Heart left ventricle (tissue), 16 donors: ENCODE measurements at regions of chr10 and their contacts with region 1.

Region 1: DNA sequence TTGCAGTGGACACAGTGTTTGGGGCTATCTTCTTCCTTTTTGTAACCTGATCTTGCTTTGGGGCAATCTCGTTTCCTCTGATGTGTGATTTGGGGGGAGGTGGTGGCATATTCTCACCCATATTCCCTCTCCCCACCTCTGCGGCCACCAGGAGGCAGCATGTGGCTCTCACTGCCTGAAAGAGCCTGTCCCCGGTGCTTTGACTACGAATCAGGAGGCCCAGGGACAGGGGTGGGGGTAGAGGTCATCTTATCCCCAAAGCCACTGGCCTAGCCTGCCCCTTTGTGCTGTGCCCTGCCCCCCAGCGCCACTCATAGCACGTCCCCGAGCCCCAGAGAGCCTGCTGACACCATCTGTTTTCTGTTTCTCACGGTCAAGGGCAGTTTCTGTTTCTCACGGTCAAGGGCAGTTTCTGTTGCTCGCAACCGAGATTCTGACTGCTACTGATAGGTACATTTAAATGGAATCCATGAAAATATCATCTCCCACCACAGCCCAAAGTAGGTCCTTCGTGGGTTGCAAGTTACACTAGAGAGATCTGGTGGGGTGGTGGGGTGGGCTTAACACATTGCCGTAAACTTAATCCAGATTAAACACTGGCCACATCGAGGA is 28.2 kb downstream of the PHYH start:
- DNase-seq: peak in 4 of 5 donors; percentile 13 to 63 (median 39)
- ATAC-seq: peak in 3 of 4 donors; percentile 47 to 59 (median 48)
- H3K4me3 ChIP-seq: no peak overlapping the region
- H3K27ac ChIP-seq: peak overlapping the region in 5 of 12 donors; percentile 5 to 43 (median 29)
- H3K4me1 ChIP-seq: peaks cover 0 to 15% (median 3%) of the 10 kb centered on the region in 12 donors
- H3K27me3 ChIP-seq: no peaks in the 10 kb centered on the region
- CTCF ChIP-seq: peak in 7 of 12 donors; percentile 7 to 48 (median 36)
- POLR2A ChIP-seq: no peak

Region 2: GRCh38 chr10:12875100-12875499 is 396.6 kb before region 1 on chr10:
- intact Hi-C with region 1: no loop called
- DNase-seq: no peak
- ATAC-seq: no peak
- H3K4me3 ChIP-seq: no peak overlapping the region
- H3K27ac ChIP-seq: no peak overlapping the region
- H3K4me1 ChIP-seq: peaks cover 0 to 12% (median 0%) of the 10 kb centered on the region in 12 donors
- H3K27me3 ChIP-seq: peaks cover 0 to 13% (median 0%) of the 10 kb centered on the region in 9 donors
- CTCF ChIP-seq: no peak
- POLR2A ChIP-seq: no peak

Region 3: GRCh38 chr10:13180788-13181187 is 90.9 kb before region 1 on chr10:
- intact Hi-C with region 1: no loop called
- DNase-seq: no peak
- ATAC-seq: no peak
- H3K4me3 ChIP-seq: no peak overlapping the region
- H3K27ac ChIP-seq: no peak overlapping the region
- H3K4me1 ChIP-seq: no peaks in the 10 kb centered on the region
- H3K27me3 ChIP-seq: no peaks in the 10 kb centered on the region
- CTCF ChIP-seq: no peak
- POLR2A ChIP-seq: no peak

Region 4: DNA sequence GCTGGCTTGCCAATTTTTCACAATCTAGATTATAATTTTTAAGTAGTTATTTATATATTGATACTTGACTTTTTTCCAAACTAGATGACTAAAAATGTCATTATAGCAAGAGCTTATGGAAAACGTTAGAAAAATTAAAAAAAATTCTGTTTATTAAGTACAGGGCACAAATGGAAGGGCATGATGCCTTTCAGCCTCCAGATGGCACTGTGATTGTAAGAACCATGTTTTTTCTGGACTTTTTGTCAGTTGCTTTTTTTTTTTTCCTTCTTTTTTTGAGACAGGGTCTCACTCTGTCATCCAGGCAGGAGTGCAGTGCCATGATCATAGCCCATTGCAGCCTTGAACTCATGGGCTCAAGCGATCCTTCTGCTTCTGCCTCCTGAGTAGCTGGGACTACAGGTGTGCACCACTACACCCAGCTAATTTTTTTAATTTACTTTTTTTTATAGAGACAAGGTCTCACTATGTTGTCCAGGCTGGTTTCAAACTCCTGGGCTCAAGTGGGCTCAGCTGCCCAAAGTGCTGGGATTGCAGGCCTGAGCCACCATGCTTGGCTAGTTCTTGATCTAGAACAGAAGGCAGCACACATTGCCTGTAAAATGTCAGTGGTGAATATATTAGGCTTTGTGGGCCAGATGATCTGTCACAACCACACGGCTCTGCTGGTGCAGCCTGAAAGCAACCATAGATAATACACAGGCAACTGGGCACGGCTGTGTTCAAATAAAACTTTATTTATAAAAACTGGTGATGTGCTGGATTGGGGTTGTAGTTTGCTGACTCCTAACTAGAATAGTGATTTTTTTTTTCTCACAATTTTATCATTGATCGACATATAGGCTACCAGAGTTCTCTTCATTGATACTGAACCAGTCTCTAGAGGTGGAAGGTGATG is 64.9 kb before region 1 on chr10:
- intact Hi-C with region 1: loop called in 1 of 10 experiments (anchors 10 kb)
- DNase-seq: no peak
- ATAC-seq: no peak
- H3K4me3 ChIP-seq: no peak overlapping the region
- H3K27ac ChIP-seq: no peak overlapping the region
- H3K4me1 ChIP-seq: no peaks in the 10 kb centered on the region
- H3K27me3 ChIP-seq: no peaks in the 10 kb centered on the region
- CTCF ChIP-seq: peak in 10 of 12 donors; percentile 11 to 53 (median 34)
- POLR2A ChIP-seq: no peak